Colonic mucosa (tissue), 4 donors: ENCODE measurements at regions of chr6 and their contacts with region 1.

Region 1: DNA sequence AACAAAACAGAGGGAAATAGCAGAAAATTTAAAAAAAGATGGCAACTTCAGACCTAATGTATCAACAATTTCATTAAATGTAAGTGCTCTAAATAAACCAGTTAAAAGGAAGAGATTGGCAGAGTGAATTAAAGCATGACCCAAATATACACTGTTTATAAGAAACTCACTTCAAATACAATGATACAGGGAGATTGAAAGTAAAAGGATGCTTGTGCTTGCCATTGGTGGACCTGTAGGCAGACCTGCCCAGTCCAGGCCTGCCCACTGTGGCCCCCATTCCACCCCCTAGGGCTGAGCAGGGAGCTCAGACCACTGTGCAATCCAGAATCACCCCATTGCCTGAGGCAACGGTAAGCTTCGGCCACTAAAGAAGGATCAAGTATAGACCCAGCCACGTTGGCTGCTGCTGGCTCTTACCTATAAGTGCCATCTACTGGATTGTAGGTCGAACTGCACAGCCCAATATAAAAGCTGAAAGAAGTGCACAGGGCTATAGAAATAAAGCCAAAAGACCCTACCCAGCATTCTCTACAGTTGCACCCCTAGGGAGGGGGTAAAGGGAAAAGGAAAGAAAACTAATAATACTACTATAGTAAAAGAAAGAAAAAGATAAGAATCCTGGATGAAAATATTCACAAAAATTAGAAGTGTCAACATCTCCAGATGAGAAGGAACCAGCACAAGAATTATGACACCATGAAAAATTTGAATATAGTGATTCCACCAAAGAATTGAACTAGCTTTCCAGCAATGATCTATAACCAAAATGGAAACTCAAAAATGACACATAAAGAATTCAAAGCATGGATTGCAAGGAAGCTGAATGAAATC is 36.1 kb downstream of the PSMB1 start:
- DNase-seq: peak; percentile 34
- H3K4me3 ChIP-seq: no peak overlapping the region
- H3K27ac ChIP-seq: no peak overlapping the region
- H3K4me1 ChIP-seq: no peaks in the 10 kb centered on the region
- H3K27me3 ChIP-seq: no peaks in the 10 kb centered on the region
- CTCF ChIP-seq: peak; percentile 75

Region 2: DNA sequence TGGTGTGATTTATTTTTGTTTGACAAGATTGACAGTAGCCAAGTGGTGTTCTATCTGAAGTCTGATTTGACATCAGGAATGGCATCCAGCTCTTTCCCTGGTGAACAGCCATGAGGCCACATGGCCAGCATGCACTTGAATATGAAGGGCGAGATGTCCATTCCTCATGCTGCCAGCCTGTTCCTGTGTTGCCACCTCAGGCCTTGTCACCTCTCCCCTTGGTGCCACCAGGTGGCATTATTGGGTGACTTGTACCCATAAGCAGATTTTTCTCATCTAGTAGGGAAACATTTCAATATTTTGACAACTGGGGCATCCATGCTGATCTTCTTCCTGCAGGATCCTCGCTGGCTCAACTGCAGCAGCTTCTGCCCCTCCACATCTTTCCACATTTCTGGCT is 566.4 kb before region 1 on chr6:
- intact Hi-C with region 1: loop called (anchors 5 kb)
- DNase-seq: no peak
- H3K4me3 ChIP-seq: no peak overlapping the region
- H3K27ac ChIP-seq: no peak overlapping the region
- H3K4me1 ChIP-seq: no peaks in the 10 kb centered on the region
- H3K27me3 ChIP-seq: no peaks in the 10 kb centered on the region
- CTCF ChIP-seq: peak; percentile 35

Region 3: GRCh38 chr6:170049641-170050561 is 467.1 kb before region 1 on chr6:
- intact Hi-C with region 1: no loop called
- DNase-seq: peak; percentile 72
- H3K4me3 ChIP-seq: no peak overlapping the region
- H3K27ac ChIP-seq: peak overlapping the region; percentile 59
- H3K4me1 ChIP-seq: no peaks in the 10 kb centered on the region
- H3K27me3 ChIP-seq: no peaks in the 10 kb centered on the region
- CTCF ChIP-seq: no peak